ENCODE measurements at regions of chr20 and their contacts with region 1.

Region 1: GRCh38 chr20:48921151-48921898 is at the start of gene ARFGEF2:
- DNase-seq: peak; percentile 79 to 99 (median 84)
- ATAC-seq: peak; percentile 96
- H3K4me3 ChIP-seq: peak within 1 kb of the TSS; percentile 99
- H3K4me3 Mint-ChIP-seq: peak within 1 kb of the TSS; percentile 94 to 100 (median 97)
- H3K27ac ChIP-seq: peak within 1 kb of the TSS; percentile 87
- H3K27ac Mint-ChIP-seq: peak within 1 kb of the TSS; percentile 95 to 99 (median 96)
- H3K4me1 ChIP-seq: peaks cover 20 to 21% of the 10 kb centered on the region in 2 donors
- H3K4me1 Mint-ChIP-seq: peaks cover 42 to 57% (median 55%) of the 10 kb centered on the region in 7 donors
- H3K27me3 ChIP-seq: no peaks in the 10 kb centered on the region
- H3K27me3 Mint-ChIP-seq: peaks cover 0 to 12% (median 0%) of the 10 kb centered on the region in 5 donors
- total RNA-seq, gene ARFGEF2: 24.2 to 33.5 (median 30.1) TPM

Region 2: GRCh38 chr20:48657475-48658470 is 263.6 kb before region 1 on chr20:
- CTCF ChIA-PET with region 1: interaction called, 5 read pairs
- POLR2A ChIA-PET with region 1: no interaction called
- intact Hi-C with region 1: loop called in 1 of 2 experiments (anchors 5 kb)
- DNase-seq: peak; percentile 33 to 73 (median 61)
- ATAC-seq: peak; percentile 94
- H3K4me3 ChIP-seq: no peak overlapping the region
- H3K4me3 Mint-ChIP-seq: no peak overlapping the region
- H3K27ac ChIP-seq: no peak overlapping the region
- H3K27ac Mint-ChIP-seq: peak overlapping the region in 2 of 9 donors; percentile 19 to 52
- H3K4me1 ChIP-seq: peaks cover 0 to 3% of the 10 kb centered on the region in 2 donors
- H3K4me1 Mint-ChIP-seq: peaks cover 0 to 10% (median 3%) of the 10 kb centered on the region in 7 donors
- H3K27me3 ChIP-seq: no peaks in the 10 kb centered on the region
- H3K27me3 Mint-ChIP-seq: no peaks in the 10 kb centered on the region

Region 3: DNA sequence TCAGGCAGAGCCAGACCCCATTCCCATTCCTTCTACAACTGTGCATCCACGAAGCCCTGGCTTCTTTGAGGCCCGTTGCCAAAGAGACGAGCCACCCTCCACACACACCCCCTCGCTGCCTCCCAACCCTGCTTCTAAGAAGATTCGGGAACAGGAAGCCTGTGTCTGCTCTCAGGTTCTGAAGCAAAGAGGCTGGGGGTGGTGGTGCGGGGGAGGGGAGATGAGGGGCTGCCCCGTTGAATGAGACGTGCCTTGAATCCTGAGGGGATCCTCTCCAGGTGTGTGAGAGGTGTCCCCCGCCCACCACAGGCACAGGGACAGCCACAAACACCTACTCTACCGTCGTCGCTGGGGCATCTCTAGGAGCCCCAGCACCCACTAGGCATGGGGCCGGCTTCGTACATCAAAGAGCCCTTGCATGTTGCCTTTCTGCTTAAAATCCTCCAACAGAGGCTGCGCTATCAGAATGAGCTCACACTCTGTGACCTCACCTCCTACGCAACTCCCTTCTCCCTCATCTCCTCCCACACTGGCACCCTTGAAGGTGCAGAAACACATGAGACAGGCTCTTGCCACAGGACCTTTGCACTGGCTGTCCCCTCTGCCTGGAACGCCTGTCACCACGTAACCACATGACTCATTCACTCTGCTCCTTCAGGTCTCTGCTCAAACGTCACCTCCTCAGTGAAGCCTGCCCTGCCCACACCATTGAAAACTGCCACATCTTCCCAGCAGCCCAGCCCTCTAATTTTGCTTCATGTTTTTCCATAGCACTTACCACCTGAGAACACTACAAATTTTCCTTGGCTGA is 152.1 kb before region 1 on chr20:
- CTCF ChIA-PET with region 1: no interaction called
- POLR2A ChIA-PET with region 1: no interaction called
- intact Hi-C with region 1: loop called in 1 of 2 experiments (anchors 5 kb)
- DNase-seq: peak; percentile 26 to 90 (median 59)
- ATAC-seq: peak; percentile 88
- H3K4me3 ChIP-seq: peak overlapping the region; percentile 3
- H3K4me3 Mint-ChIP-seq: peak overlapping the region; percentile 37 to 78 (median 70)
- H3K27ac ChIP-seq: peak overlapping the region; percentile 60
- H3K27ac Mint-ChIP-seq: peak overlapping the region; percentile 43 to 95 (median 89)
- H3K4me1 ChIP-seq: peaks cover 25 to 67% of the 10 kb centered on the region in 2 donors
- H3K4me1 Mint-ChIP-seq: peaks cover 32 to 85% (median 52%) of the 10 kb centered on the region in 7 donors
- H3K27me3 ChIP-seq: no peaks in the 10 kb centered on the region
- H3K27me3 Mint-ChIP-seq: no peaks in the 10 kb centered on the region

Region 4: GRCh38 chr20:48910347-48910791 is 11.0 kb before region 1 on chr20:
- CTCF ChIA-PET with region 1: no interaction called
- POLR2A ChIA-PET with region 1: no interaction called
- intact Hi-C with region 1: no loop called
- DNase-seq: no peak
- ATAC-seq: peak; percentile 91
- H3K4me3 ChIP-seq: no peak overlapping the region
- H3K4me3 Mint-ChIP-seq: no peak overlapping the region
- H3K27ac ChIP-seq: no peak overlapping the region
- H3K27ac Mint-ChIP-seq: peak overlapping the region in 1 of 9 donors; percentile 5
- H3K4me1 ChIP-seq: peaks cover 0 to 5% of the 10 kb centered on the region in 2 donors
- H3K4me1 Mint-ChIP-seq: peaks cover 0 to 8% (median 0%) of the 10 kb centered on the region in 7 donors
- H3K27me3 ChIP-seq: no peaks in the 10 kb centered on the region
- H3K27me3 Mint-ChIP-seq: peaks cover 0 to 9% (median 5%) of the 10 kb centered on the region in 5 donors

Region 5: DNA sequence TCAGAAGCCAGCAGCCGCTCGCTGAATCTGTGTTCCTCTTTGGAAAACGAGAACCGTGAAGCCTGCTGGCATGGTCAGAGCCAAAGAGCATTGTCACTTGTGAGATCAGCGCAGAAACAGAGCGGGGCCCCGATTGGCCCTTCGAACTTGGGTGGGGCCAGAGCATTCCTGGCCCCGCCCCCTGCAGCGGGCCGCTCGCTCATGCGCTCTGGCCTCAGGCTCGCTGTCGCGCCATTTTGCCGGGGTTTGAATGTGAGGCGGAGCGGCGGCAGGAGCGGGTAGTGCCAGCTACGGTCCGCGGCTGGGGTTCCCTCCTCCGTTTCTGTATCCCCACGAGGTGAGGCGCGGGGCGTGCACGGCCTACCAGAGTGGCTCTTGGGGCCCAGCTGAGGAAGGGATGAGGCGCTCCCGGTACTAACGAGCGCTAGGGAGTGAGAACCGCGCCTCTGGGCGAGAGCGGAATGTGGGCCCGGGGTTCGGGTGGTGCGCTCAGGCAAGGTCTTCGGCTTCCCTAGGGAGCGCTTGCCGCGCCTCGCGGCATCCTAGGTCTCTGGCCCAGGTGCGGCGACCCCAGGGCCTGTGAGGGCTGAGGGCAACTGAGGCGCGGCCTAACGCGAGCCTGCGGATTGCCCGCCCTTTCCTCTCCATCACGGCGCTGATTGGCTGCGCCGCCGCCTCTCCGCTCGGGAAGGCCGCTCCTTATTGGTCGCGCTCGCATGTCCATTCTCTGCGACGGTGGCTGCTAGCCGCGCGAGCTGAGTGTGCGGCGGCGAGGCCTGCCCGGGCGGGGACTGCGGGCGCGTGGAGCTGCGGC is 125.0 kb after region 1 on chr20 and contains the start of gene CSE1L:
- CTCF ChIA-PET with region 1: no interaction called
- POLR2A ChIA-PET with region 1: no interaction called
- intact Hi-C with region 1: loop called (anchors 1 kb)
- DNase-seq: peak; percentile 90 to 98 (median 95)
- ATAC-seq: peak; percentile 92
- H3K4me3 ChIP-seq: peak within 1 kb of the TSS; percentile 99
- H3K4me3 Mint-ChIP-seq: peak within 1 kb of the TSS; percentile 94 to 99 (median 98)
- H3K27ac ChIP-seq: peak within 1 kb of the TSS; percentile 89
- H3K27ac Mint-ChIP-seq: peak within 1 kb of the TSS; percentile 92 to 100 (median 98)
- H3K4me1 ChIP-seq: peaks cover 11 to 14% of the 10 kb centered on the region in 2 donors
- H3K4me1 Mint-ChIP-seq: peaks cover 24 to 51% (median 42%) of the 10 kb centered on the region in 7 donors
- H3K27me3 ChIP-seq: no peaks in the 10 kb centered on the region
- H3K27me3 Mint-ChIP-seq: peaks cover 0 to 4% (median 0%) of the 10 kb centered on the region in 5 donors
- total RNA-seq, gene CSE1L: 23.3 to 73.0 (median 41.1) TPM

Region 6: GRCh38 chr20:49219089-49219923 is 298.0 kb after region 1 on chr20 and contains the start of gene DDX27:
- CTCF ChIA-PET with region 1: no interaction called
- POLR2A ChIA-PET with region 1: no interaction called
- intact Hi-C with region 1: loop called in 1 of 2 experiments (anchors 5 kb)
- DNase-seq: peak; percentile 90 to 98 (median 98)
- ATAC-seq: peak; percentile 92
- H3K4me3 ChIP-seq: peak within 1 kb of the TSS; percentile 91
- H3K4me3 Mint-ChIP-seq: peak within 1 kb of the TSS; percentile 88 to 100 (median 96)
- H3K27ac ChIP-seq: peak within 1 kb of the TSS; percentile 99
- H3K27ac Mint-ChIP-seq: peak within 1 kb of the TSS; percentile 89 to 100 (median 96)
- H3K4me1 ChIP-seq: peaks cover 9 to 11% of the 10 kb centered on the region in 2 donors
- H3K4me1 Mint-ChIP-seq: peaks cover 14 to 42% (median 26%) of the 10 kb centered on the region in 7 donors
- H3K27me3 ChIP-seq: no peaks in the 10 kb centered on the region
- H3K27me3 Mint-ChIP-seq: peaks cover 0 to 2% (median 0%) of the 10 kb centered on the region in 5 donors
- total RNA-seq, gene DDX27: 43.4 to 94.1 (median 65.7) TPM

Measured in naive thymus-derived CD4-positive, alpha-beta T cell (primary cell).